ENCODE measurements at regions of chr3 and their contacts with region 1.

Region 1: DNA sequence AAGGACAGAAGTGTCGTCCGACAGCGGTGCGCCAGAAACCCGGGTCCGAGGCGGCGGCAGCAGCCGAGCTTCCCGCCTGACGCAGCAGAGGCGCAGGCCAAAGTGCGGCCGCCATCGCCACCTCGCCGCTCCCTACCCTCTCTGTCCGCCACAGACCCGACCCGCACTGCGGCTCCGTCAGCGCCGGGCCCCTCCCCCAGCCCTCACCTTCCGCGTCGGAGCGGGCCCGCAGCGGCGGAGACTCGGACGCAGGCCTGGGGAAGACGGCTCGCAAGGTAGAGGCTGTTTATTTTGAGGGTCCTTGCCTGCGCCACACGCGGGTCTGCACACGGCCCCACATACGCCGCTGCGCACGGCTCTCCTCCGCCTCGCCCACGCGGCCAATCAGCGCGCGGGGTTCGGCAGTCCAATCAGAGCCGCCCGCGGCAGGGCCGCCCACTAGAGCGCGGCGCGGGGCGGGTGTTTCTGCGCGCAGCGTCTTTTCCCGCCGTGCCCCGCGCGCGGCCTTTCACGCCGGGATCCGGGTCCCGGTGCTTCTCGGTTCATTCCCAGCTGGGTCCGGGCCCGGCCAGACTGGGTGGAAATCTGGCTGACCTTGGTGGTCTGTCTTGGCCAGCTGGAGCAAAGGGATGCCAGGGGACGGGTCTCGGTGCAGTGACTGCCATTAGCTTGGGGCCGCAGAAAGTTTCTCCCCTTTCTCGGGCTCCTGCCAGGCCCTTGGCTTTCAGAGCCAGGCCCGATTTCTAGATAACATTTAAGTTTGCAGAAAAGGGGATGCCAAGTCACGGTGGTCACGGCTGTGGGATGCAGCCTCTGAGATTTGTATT is at the start of gene CNBP:
- DNase-seq: peak; percentile 95 to 97 (median 95)
- ATAC-seq: peak; percentile 97 to 99 (median 98)
- H3K4me3 ChIP-seq: peak within 1 kb of the TSS; percentile 66 to 99 (median 88)
- H3K27ac ChIP-seq: peak within 1 kb of the TSS; percentile 92 to 100 (median 98)
- H3K4me1 ChIP-seq: peaks cover 10 to 68% (median 45%) of the 10 kb centered on the region in 12 donors
- H3K27me3 ChIP-seq: no peaks in the 10 kb centered on the region
- CTCF ChIP-seq: no peak
- POLR2A ChIP-seq: peak; percentile 76 to 99
- total RNA-seq, gene CNBP: 388 to 743 (median 512) TPM

Region 2: DNA sequence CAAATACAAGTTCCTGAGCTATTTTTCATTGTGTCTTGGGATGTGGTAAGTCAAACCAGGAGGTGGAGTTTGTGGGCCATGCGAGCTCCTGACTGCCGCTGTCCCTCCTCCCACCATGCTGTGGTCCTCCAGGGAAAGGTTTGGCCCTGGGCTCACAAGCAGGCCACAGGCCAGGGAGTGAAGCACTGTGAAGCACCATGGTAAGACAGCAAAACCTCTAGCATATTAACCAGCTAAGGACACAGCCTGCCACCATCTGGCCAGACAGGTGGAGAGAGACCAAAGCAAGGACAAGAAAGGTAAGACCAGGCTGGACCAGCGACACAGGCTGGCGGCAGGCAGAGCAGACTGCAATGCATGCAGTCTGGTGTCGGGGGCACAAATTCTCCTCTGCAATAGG is 77.5 kb before region 1 on chr3:
- intact Hi-C with region 1: no loop called
- DNase-seq: no peak
- ATAC-seq: peak in 2 of 4 donors; percentile 40 to 71
- H3K4me3 ChIP-seq: no peak overlapping the region
- H3K27ac ChIP-seq: no peak overlapping the region
- H3K4me1 ChIP-seq: peaks cover 0 to 26% (median 7%) of the 10 kb centered on the region in 12 donors
- H3K27me3 ChIP-seq: no peaks in the 10 kb centered on the region
- CTCF ChIP-seq: peak in 1 of 12 donors; percentile 11
- POLR2A ChIP-seq: no peak

Region 3: DNA sequence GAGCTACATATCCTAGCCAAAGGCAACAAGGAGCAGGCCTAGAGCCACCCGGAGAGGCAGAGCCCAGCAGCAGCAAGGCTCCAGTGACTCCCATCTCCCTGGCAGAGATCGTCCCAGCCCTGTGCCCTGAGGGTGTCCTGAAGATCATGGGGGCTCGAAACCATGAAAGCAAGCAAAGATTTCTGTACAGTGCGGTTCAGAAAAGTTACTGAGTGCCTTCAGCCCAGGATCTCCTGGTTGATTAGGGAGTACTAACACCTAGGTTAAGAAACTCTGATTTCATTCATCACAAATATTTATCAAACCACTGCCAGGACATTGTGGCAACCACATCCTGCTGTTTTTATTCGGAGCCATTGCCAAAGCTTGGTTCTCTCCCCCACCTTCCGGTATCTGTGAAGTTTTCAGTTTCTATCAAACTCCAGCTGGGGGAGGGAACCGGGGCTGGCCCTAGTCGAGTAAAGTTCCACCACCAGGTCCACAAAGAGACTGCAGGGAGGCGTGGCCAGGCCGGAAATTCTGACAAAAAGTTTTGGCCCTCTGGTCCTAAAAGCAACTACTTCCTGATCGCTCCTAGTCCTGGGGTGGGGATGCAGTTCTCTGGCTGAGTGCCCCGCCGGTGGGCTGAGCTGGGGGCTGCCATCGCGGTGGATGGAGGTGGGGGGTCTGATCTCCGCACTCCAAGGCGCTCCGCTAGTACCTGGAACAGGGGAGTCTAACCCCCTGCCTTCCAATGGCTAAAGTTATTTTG is 63.4 kb before region 1 on chr3:
- intact Hi-C with region 1: loop called in 1 of 10 experiments (anchors 5 kb)
- DNase-seq: peak; percentile 88 to 90 (median 90)
- ATAC-seq: peak; percentile 44 to 77 (median 58)
- H3K4me3 ChIP-seq: peak overlapping the region; percentile 66 to 97 (median 89)
- H3K27ac ChIP-seq: peak overlapping the region; percentile 73 to 97 (median 92)
- H3K4me1 ChIP-seq: peaks cover 10 to 47% (median 30%) of the 10 kb centered on the region in 12 donors
- H3K27me3 ChIP-seq: no peaks in the 10 kb centered on the region
- CTCF ChIP-seq: peak in 6 of 12 donors; percentile 8 to 54 (median 32)
- POLR2A ChIP-seq: peak in 1 of 2 donors; percentile 56

Region 4: DNA sequence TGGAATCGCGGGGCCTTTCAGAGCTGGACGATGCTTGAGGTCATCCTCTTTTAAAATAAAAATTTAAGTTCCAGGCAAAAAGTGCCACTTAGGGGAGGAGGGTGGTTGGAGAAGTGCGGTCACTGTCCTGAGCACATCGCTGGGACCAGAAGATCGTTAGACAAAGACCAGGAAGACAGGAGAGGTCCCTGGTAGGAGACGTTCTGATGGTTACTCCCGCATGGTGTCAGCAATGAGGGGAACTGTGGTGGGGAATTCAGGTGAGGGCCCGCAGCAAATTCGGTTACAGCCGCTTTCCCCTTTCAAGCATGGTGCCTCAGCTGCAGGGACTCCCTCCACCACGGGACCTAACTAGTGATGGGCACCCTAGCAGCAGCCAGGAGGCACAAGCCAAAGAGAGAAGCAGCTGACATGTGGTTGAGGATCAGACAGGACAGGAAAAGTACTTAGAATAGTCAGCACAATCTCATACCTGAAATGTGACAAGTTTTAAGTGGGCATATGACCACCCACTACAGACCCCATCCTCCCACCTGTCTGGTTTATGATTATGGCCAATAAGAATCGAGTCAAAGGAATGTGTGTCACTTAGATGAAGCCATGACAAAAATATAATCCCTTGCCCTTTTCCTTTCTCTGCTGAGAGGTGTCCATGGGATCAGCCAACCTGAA is 21.8 kb before region 1 on chr3:
- intact Hi-C with region 1: loop called in 1 of 10 experiments (anchors 2 kb)
- DNase-seq: peak in 1 of 5 donors; percentile 35
- ATAC-seq: peak in 3 of 4 donors; percentile 7 to 11 (median 8)
- H3K4me3 ChIP-seq: peak overlapping the region; percentile 65 to 93 (median 78)
- H3K27ac ChIP-seq: peak overlapping the region; percentile 71 to 99 (median 92)
- H3K4me1 ChIP-seq: peaks cover 4 to 26% (median 20%) of the 10 kb centered on the region in 12 donors
- H3K27me3 ChIP-seq: no peaks in the 10 kb centered on the region
- CTCF ChIP-seq: no peak
- POLR2A ChIP-seq: no peak

Region 5: GRCh38 chr3:129224984-129225393 is 41.2 kb after region 1 on chr3:
- intact Hi-C with region 1: loop called in 6 of 10 experiments (anchors 1 to 5 kb)
- DNase-seq: peak; percentile 87 to 95 (median 89)
- ATAC-seq: peak; percentile 94 to 97 (median 96)
- H3K4me3 ChIP-seq: peak overlapping the region in 9 of 12 donors; percentile 4 to 44 (median 29)
- H3K27ac ChIP-seq: peak overlapping the region; percentile 75 to 93 (median 86)
- H3K4me1 ChIP-seq: peaks cover 8 to 62% (median 49%) of the 10 kb centered on the region in 12 donors
- H3K27me3 ChIP-seq: no peaks in the 10 kb centered on the region
- CTCF ChIP-seq: no peak
- POLR2A ChIP-seq: no peak

Region 6: DNA sequence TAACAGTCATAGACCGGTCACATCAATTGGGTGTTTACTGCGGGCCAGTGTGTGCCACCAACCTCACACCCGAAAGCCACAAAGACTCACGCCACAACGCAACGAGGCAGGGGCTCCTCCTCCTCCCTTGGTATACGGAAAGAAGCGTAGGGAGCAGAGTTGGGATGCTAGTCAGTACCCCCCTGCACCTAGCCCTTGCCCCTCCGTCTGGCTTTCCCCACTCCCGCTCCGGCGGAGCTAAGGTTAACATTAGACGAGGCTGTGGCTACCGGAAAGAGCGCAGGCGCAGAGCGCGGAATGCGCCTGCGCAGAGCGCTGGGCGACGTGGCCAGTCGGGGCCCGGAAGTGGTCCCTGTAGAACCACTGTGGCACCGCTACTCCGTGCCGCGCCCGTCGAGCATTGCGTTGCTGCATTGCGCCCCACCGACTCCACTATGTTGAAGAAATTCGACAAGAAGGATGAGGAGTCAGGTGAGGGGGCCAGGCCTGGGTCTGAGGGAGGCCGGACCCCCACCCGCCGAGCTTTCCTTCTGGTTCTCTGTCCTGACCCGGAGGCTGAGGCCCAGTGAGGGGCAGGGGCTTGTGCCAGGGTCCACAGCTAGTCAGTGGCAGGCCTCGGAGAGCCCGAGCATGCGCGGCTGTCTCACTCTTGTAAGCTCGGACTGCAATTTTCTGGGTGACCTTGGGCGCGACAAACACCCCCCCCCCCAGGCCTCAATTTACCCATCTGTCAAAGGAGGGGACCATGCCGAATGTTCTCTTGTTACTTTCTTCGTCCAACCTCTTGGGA is 65.7 kb after region 1 on chr3 and contains the start of gene COPG1:
- intact Hi-C with region 1: loop called in 7 of 10 experiments (anchors 2 to 5 kb)
- DNase-seq: peak; percentile 85 to 94 (median 87)
- ATAC-seq: peak; percentile 85 to 95 (median 94)
- H3K4me3 ChIP-seq: peak within 1 kb of the TSS; percentile 60 to 100 (median 96)
- H3K27ac ChIP-seq: peak within 1 kb of the TSS; percentile 72 to 97 (median 85)
- H3K4me1 ChIP-seq: peaks cover 0 to 53% (median 32%) of the 10 kb centered on the region in 12 donors
- H3K27me3 ChIP-seq: no peaks in the 10 kb centered on the region
- CTCF ChIP-seq: peak in 1 of 12 donors; percentile 14
- POLR2A ChIP-seq: peak; percentile 27 to 89
- total RNA-seq, gene COPG1: 78.6 to 121 (median 93.9) TPM

Measured in heart left ventricle (tissue), 16 donors.